ENCODE measurements at regions of chr2 and their contacts with region 1.

Region 1: GRCh38 chr2:70214953-70215549 is 24.2 kb upstream of the C2orf42 start:
- DNase-seq: no peak
- ATAC-seq: no peak

Region 2: GRCh38 chr2:70161069-70161534 is 53.9 kb before region 1 on chr2:
- intact Hi-C with region 1: loop called (anchors 10 kb)
- DNase-seq: no peak
- ATAC-seq: no peak

Region 3: DNA sequence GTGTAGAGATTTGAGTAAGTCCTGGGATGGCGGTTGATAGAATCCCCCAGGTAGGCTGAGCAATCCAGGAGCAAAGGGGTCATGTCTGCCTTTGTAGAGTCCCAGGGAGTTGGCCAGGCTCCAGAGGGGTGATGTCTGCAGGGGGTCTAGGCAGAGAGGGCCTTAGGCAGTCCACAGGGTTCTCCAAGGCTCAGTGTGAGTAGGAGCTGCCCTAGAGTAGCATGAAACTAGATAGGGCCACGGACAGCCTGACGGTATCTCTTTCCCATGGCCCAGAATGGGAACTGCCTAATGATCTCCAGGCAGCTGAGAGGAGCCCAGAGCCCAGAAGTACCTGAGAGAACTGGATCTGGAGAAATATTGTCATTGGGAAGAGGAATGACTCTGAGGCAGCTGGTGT is 95.8 kb after region 1 on chr2:
- intact Hi-C with region 1: no loop called
- DNase-seq: no peak
- ATAC-seq: no peak